Naive thymus-derived CD4-positive, alpha-beta T cell (primary cell): ENCODE measurements at regions of chr5 and their contacts with region 1.

Region 1: DNA sequence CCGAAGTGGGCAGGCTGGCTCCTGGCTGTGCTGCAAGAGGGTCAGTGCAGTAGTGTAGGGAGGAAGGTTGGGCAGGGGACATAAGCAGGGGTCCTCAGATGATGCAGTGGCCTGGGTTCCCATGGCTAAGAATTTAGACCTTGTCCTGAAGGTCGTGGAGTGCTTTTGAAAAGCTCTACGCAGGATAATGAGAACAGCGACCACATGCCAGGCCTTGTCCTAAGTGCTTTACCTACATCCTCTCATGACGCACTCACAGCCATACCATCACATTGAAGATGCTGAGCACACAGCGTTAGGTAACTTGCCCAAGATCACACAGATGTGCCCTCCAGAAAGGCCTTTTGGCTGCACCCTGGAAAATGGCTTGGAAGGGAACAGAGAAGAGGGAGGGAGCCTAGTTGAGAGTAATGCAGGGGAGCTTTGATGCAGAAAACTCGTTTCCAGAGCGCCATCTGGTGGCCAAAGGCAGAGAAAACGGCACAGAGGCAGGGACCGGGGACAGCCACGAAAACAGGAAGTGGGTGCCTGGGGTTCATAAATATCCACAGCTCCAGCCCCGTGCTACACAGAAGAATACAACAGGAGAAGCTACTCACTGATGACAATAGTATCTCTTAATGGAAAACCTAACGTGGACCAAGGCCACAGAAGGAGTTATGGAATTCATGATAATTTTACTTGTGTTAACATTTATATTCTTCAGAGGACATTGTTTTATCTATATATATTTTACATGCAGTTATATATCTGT is 2.6 kb upstream of the PCDH12 start:
- DNase-seq: peak; percentile 82 to 95 (median 89)
- ATAC-seq: peak; percentile 94
- H3K4me3 ChIP-seq: peak overlapping the region; percentile 7
- H3K4me3 Mint-ChIP-seq: peak overlapping the region; percentile 5 to 75 (median 54)
- H3K27ac ChIP-seq: peak overlapping the region; percentile 50
- H3K27ac Mint-ChIP-seq: peak overlapping the region; percentile 82 to 93 (median 92)
- H3K4me1 ChIP-seq: peaks cover 30 to 43% of the 10 kb centered on the region in 2 donors
- H3K4me1 Mint-ChIP-seq: peaks cover 29 to 51% (median 40%) of the 10 kb centered on the region in 7 donors
- H3K27me3 ChIP-seq: no peaks in the 10 kb centered on the region
- H3K27me3 Mint-ChIP-seq: no peaks in the 10 kb centered on the region

Region 2: GRCh38 chr5:141681695-141682641 is 278.7 kb before region 1 on chr5 and contains the start of gene ARAP3:
- CTCF ChIA-PET with region 1: interaction called, 16 read pairs
- POLR2A ChIA-PET with region 1: interaction called, 20 read pairs
- intact Hi-C with region 1: no loop called
- DNase-seq: peak in 2 of 9 donors; percentile 35 to 64
- ATAC-seq: peak; percentile 84
- H3K4me3 ChIP-seq: peak within 1 kb of the TSS; percentile 64
- H3K4me3 Mint-ChIP-seq: peak within 1 kb of the TSS; percentile 65 to 84 (median 78)
- H3K27ac ChIP-seq: peak within 1 kb of the TSS; percentile 32
- H3K27ac Mint-ChIP-seq: peak within 1 kb of the TSS in 8 of 9 donors; percentile 4 to 77 (median 46)
- H3K4me1 ChIP-seq: peaks cover 14 to 16% of the 10 kb centered on the region in 2 donors
- H3K4me1 Mint-ChIP-seq: peaks cover 15 to 36% (median 27%) of the 10 kb centered on the region in 7 donors
- H3K27me3 ChIP-seq: no peaks in the 10 kb centered on the region
- H3K27me3 Mint-ChIP-seq: no peaks in the 10 kb centered on the region
- total RNA-seq, gene ARAP3: 1.0 to 15.3 (median 9.8) TPM

Region 3: GRCh38 chr5:141849375-141850243 is 111.0 kb before region 1 on chr5:
- CTCF ChIA-PET with region 1: no interaction called
- POLR2A ChIA-PET with region 1: interaction called, 5 read pairs
- intact Hi-C with region 1: loop called (anchors 1 to 2 kb)
- DNase-seq: peak; percentile 41 to 77 (median 56)
- ATAC-seq: peak; percentile 82
- H3K4me3 ChIP-seq: peak overlapping the region; percentile 98
- H3K4me3 Mint-ChIP-seq: peak overlapping the region; percentile 86 to 93 (median 89)
- H3K27ac ChIP-seq: peak overlapping the region; percentile 74
- H3K27ac Mint-ChIP-seq: peak overlapping the region; percentile 54 to 98 (median 88)
- H3K4me1 ChIP-seq: no peaks in the 10 kb centered on the region
- H3K4me1 Mint-ChIP-seq: peaks cover 6 to 24% (median 12%) of the 10 kb centered on the region in 7 donors
- H3K27me3 ChIP-seq: no peaks in the 10 kb centered on the region
- H3K27me3 Mint-ChIP-seq: peaks cover 0 to 2% (median 0%) of the 10 kb centered on the region in 5 donors

Region 4: GRCh38 chr5:141914199-141914743 is 46.4 kb before region 1 on chr5:
- CTCF ChIA-PET with region 1: interaction called, 11 read pairs
- POLR2A ChIA-PET with region 1: interaction called, 5 read pairs
- intact Hi-C with region 1: loop called in 1 of 2 experiments (anchors 1 kb)
- DNase-seq: peak in 4 of 9 donors; percentile 16 to 19 (median 18)
- ATAC-seq: peak; percentile 73
- H3K4me3 ChIP-seq: peak overlapping the region; percentile 48
- H3K4me3 Mint-ChIP-seq: peak overlapping the region in 8 of 10 donors; percentile 48 to 75 (median 63)
- H3K27ac ChIP-seq: no peak overlapping the region
- H3K27ac Mint-ChIP-seq: no peak overlapping the region
- H3K4me1 ChIP-seq: peaks cover 0 to 7% of the 10 kb centered on the region in 2 donors
- H3K4me1 Mint-ChIP-seq: peaks cover 6 to 18% (median 14%) of the 10 kb centered on the region in 7 donors
- H3K27me3 ChIP-seq: peaks cover 5 to 10% of the 10 kb centered on the region in 2 donors
- H3K27me3 Mint-ChIP-seq: peaks cover 21 to 55% (median 23%) of the 10 kb centered on the region in 5 donors

Region 5: DNA sequence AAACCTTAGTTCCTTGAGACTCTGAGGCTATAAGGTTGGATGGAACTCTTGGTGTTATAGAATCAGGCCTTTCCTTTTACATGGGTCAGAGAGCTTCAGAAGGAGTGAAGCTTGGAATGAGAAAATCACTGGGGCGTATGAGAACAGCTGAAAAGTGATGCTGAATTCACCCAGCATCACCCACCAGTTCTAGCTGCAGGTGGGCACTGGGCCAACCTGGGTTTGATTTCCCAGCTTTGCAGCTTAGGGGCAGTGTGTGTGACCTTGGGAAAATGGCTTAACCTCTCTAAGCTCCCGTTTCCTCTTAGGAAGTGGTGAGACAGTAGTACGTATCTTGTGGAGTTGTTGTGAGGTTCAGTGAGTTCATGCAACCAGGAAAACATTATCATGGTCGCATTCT is 13.3 kb before region 1 on chr5:
- CTCF ChIA-PET with region 1: interaction called, 15 read pairs
- POLR2A ChIA-PET with region 1: interaction called, 4 read pairs
- intact Hi-C with region 1: no loop called
- DNase-seq: no peak
- ATAC-seq: no peak
- H3K4me3 ChIP-seq: no peak overlapping the region
- H3K4me3 Mint-ChIP-seq: no peak overlapping the region
- H3K27ac ChIP-seq: no peak overlapping the region
- H3K27ac Mint-ChIP-seq: peak overlapping the region in 2 of 9 donors; percentile 46 to 60
- H3K4me1 ChIP-seq: peaks cover 0 to 8% of the 10 kb centered on the region in 2 donors
- H3K4me1 Mint-ChIP-seq: peaks cover 6 to 22% (median 13%) of the 10 kb centered on the region in 7 donors
- H3K27me3 ChIP-seq: no peaks in the 10 kb centered on the region
- H3K27me3 Mint-ChIP-seq: no peaks in the 10 kb centered on the region